Esophagus muscularis mucosa (tissue), 4 donors: ENCODE measurements at regions of chr6 and their contacts with region 1.

Region 1: DNA sequence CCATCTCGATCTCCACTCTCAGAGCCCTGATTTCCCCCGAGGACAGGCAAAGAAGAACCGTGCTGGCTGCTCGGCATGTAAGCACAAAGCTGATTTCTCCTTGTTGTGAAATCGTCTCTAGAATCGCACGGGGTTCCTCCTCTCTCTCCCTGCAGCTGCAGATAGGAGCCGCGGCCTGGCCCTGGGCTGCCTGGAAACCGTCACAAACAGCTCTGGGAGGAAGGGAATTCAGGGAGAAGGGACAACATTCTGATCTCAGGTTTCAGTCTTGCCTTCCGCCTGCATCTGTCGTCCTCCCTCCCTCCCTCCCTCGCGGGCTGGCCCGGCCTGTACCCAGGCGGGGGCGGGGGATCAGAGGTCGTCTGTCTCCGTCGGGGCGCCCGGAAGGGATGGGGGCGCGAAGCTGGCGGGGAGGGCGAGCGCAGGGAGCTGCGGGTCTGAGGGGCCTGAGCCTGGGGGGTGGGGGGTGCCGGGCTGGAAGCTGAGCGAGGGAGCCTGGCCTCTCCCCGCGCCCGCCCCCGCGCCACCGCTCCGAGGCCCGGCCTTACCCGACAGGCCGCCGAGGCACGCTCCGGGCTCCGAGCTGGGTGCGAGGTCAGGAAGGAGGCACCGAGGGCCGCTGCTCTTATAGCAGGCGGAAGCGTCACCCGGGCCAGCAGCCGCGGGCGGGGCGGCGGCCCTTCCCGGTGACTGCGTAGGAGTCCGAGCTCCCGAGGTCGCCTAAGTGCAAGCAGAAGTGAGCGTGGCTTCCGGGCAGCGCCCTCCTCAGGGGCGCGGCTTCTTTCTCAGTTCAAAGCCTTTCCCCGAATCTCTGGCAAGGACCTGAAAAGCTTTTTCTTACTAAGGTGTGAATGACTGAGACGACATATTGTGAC is at the start of gene SERPINB1:
- DNase-seq: peak; percentile 97
- H3K4me3 ChIP-seq: peak within 1 kb of the TSS; percentile 64 to 75 (median 71)
- H3K27ac ChIP-seq: peak within 1 kb of the TSS; percentile 95 to 97 (median 95)
- H3K4me1 ChIP-seq: peaks cover 38 to 52% (median 50%) of the 10 kb centered on the region in 4 donors
- H3K27me3 ChIP-seq: no peaks in the 10 kb centered on the region
- CTCF ChIP-seq: peak in 2 of 3 experiments; percentile 9 to 19
- EP300 ChIP-seq: peak; percentile 87
- POLR2A ChIP-seq: peak; percentile 67
- total RNA-seq, gene SERPINB1: 23.3 to 123 (median 29.9) TPM

Region 2: DNA sequence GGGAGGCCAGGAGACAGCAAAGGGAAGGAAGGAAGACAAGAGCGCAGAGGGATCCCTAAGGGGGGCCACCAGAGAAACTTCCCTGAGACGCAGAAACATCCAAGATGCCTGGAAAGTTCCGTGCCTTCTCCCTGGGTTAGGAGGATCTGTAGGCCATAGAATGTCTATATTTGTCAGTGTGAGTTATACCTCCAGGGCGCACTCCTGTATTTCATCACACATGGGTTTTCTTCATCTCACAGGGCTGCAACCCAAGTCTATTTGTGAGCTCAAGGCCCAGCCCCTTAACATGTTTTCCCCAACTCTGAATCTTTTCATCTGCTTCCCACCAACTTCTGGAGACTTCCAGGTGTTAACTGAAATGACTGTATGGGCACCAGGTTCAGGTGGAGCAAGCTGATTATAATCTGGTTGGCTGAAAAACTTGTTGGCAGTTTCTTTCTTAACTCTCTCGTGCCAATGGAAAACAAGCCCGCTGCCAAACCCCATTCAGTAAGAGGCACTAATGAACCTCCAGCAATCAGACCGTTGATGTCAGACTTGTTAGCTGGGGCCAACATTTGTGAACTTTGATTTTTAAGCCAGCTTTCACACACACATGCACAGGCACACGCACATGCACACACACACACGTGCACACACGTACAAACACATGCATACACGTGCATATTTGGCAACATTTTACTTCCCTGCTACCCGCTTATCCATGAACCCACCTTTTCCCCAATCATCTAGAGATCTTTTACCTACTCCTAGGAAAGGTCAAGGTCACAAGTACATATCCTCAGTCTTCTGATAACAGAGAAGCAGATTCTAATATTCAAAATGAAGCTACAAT is 348.6 kb before region 1 on chr6:
- intact Hi-C with region 1: no loop called
- DNase-seq: no peak
- H3K4me3 ChIP-seq: no peak overlapping the region
- H3K27ac ChIP-seq: no peak overlapping the region
- H3K4me1 ChIP-seq: no peaks in the 10 kb centered on the region
- H3K27me3 ChIP-seq: no peaks in the 10 kb centered on the region
- CTCF ChIP-seq: no peak
- EP300 ChIP-seq: no peak
- POLR2A ChIP-seq: no peak

Region 3: DNA sequence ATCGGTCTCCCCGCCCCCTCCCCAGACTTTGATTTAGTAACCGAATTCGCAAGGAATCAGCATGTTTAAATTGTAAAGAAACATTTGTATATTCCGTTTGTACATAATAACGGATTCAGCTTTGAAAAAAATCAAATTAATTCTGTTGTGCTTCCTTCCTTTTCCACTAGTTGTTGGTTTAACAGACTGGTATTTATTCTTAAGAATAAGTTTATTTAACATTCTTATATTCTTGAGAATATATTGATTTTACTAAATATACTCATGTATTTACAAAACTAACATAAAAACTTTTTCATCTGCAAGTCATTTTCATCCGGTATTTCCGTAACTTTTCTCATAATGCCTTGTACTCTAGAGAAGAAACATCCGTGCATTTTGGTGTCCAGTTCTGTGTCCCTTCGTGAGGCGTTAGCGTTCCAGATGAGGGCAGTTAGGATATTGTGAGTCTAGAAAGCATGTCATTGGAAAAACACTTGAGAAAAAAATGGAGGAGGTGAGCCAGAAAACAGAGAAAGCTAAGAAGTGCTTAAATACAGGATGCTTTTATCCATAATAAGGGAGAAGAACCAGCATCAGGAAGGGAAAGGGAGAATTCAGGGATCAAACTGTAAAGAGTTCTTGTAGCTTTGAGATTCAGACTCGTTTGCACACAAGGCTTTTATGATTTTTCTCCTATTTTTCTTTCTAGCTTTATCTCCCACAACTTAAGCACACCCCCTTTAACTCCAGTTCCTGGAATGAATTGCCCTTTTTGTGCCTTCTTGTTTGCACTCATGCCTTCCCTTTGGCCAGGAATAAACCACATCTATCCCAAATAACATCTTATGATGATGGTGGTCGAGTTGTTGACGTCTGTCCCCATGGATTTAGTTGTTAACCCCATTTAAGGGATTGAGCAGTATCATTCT is 74.5 kb before region 1 on chr6:
- intact Hi-C with region 1: no loop called
- DNase-seq: no peak
- H3K4me3 ChIP-seq: peak overlapping the region; percentile 77 to 96 (median 89)
- H3K27ac ChIP-seq: peak overlapping the region; percentile 95 to 98 (median 97)
- H3K4me1 ChIP-seq: peaks cover 42 to 64% (median 50%) of the 10 kb centered on the region in 4 donors
- H3K27me3 ChIP-seq: no peaks in the 10 kb centered on the region
- CTCF ChIP-seq: peak in 1 of 3 experiments; percentile 21
- EP300 ChIP-seq: no peak
- POLR2A ChIP-seq: no peak

Region 4: GRCh38 chr6:2791124-2791974 is 50.2 kb before region 1 on chr6:
- intact Hi-C with region 1: loop called (anchors 2 kb)
- DNase-seq: no peak
- H3K4me3 ChIP-seq: peak overlapping the region in 3 of 4 donors; percentile 3 to 27 (median 18)
- H3K27ac ChIP-seq: peak overlapping the region; percentile 73 to 85 (median 76)
- H3K4me1 ChIP-seq: peaks cover 25 to 44% (median 39%) of the 10 kb centered on the region in 4 donors
- H3K27me3 ChIP-seq: no peaks in the 10 kb centered on the region
- CTCF ChIP-seq: peak; percentile 72 to 83 (median 80)
- EP300 ChIP-seq: no peak
- POLR2A ChIP-seq: no peak

Region 5: DNA sequence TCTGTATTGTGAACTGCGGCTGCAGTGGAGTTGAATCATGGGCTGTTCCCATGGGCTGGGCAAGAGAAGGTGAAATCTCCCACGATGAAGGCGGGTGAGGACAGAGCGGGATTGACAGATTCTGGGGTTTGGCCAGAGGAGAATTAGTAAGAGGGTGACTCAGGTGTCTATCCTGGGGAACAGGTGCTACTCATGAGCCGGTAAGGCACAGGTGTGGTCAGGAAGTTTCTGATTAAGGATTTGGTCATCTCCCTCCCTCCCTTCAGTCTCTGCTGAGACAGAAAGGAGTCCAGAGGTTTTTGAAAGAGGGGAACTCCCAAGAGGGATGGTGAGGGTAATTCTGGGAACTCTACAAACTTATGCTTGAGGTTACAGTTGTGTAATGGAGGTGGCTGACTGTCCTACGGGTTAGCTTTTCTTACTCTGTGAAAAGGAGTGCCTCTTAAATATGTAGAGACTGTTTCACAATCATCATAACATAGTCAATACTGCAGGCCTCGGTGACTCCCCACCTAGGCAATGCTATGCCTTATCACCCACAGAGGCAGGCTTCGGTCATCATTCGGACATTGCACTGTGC is 31.3 kb before region 1 on chr6:
- intact Hi-C with region 1: no loop called
- DNase-seq: peak; percentile 53
- H3K4me3 ChIP-seq: no peak overlapping the region
- H3K27ac ChIP-seq: no peak overlapping the region
- H3K4me1 ChIP-seq: no peaks in the 10 kb centered on the region
- H3K27me3 ChIP-seq: no peaks in the 10 kb centered on the region
- CTCF ChIP-seq: no peak
- EP300 ChIP-seq: no peak
- POLR2A ChIP-seq: no peak

Region 6: GRCh38 chr6:2988426-2989331 is 147.2 kb after region 1 on chr6:
- intact Hi-C with region 1: loop called (anchors 5 kb)
- DNase-seq: peak; percentile 98
- H3K4me3 ChIP-seq: peak overlapping the region; percentile 76 to 90 (median 86)
- H3K27ac ChIP-seq: peak overlapping the region; percentile 91 to 99 (median 94)
- H3K4me1 ChIP-seq: peaks cover 19 to 40% (median 30%) of the 10 kb centered on the region in 4 donors
- H3K27me3 ChIP-seq: no peaks in the 10 kb centered on the region
- CTCF ChIP-seq: peak; percentile 94 to 99 (median 95)
- EP300 ChIP-seq: no peak
- POLR2A ChIP-seq: peak; percentile 44

Region 7: GRCh38 chr6:3518356-3519225 is 677.1 kb after region 1 on chr6:
- intact Hi-C with region 1: no loop called
- DNase-seq: no peak
- H3K4me3 ChIP-seq: no peak overlapping the region
- H3K27ac ChIP-seq: peak overlapping the region in 1 of 4 donors; percentile 11
- H3K4me1 ChIP-seq: peaks cover 0 to 18% (median 13%) of the 10 kb centered on the region in 4 donors
- H3K27me3 ChIP-seq: no peaks in the 10 kb centered on the region
- CTCF ChIP-seq: no peak
- EP300 ChIP-seq: no peak
- POLR2A ChIP-seq: no peak